H1 (cell line): ENCODE measurements at regions of chr5 and their contacts with region 1.

Region 1: GRCh38 chr5:10214041-10214440 is 35.6 kb downstream of the ATPSCKMT start:
- DNase-seq: no peak
- H3K4me3 ChIP-seq: no peak overlapping the region
- H3K27ac ChIP-seq: no peak overlapping the region
- H3K4me1 ChIP-seq: no peaks in the 10 kb centered on the region
- H3K27me3 ChIP-seq: no peaks in the 10 kb centered on the region
- CTCF ChIP-seq: no peak
- EP300 ChIP-seq: no peak
- POLR2A ChIP-seq: no peak
- RAD21 ChIP-seq: no peak

Region 2: GRCh38 chr5:10201223-10201868 is 12.7 kb before region 1 on chr5:
- CTCF ChIA-PET with region 1: interaction called, 13 read pairs
- POLR2A ChIA-PET with region 1: interaction called, 3 read pairs
- DNase-seq: peak; percentile 21 to 70
- H3K4me3 ChIP-seq: no peak overlapping the region; a peak in 1 of 8 replicates
- H3K27ac ChIP-seq: no peak overlapping the region
- H3K4me1 ChIP-seq: peaks cover 2 to 9% (median 4%) of the 10 kb centered on the region in 4 experiments; a peak in 3 of 7 replicates
- H3K27me3 ChIP-seq: no peaks in the 10 kb centered on the region
- CTCF ChIP-seq: peak; percentile 31 to 92 (median 69)
- EP300 ChIP-seq: no peak
- POLR2A ChIP-seq: no peak
- RAD21 ChIP-seq: peak; percentile 62 to 72